ENCODE measurements at regions of chr9 and their contacts with region 1.

Region 1: DNA sequence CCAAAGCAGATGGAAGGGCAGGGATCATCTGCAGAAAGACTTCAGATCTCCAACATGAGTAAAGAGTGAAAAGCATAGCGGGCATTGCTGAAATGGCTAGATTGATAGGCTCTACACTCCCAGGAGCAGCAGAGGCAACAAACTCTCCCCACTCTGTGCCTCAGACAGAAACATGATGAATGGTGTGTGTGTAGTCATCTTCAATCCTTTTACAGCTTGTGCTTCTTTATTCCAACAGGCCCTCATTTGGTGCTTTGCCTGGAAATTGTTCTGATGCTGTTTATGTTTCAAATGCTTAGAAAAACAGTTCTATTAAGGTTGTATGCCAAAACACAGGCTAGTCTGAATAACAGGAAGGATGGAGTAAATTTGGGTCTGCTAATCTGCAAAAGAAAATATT is 176.2 kb downstream of the DMRTA1 start:
- DNase-seq: no peak
- H3K4me3 ChIP-seq: no peak overlapping the region
- H3K27ac ChIP-seq: no peak overlapping the region
- H3K4me1 ChIP-seq: no peaks in the 10 kb centered on the region
- H3K27me3 ChIP-seq: no peaks in the 10 kb centered on the region
- CTCF ChIP-seq: no peak
- POLR2A ChIP-seq: no peak

Region 2: GRCh38 chr9:22374051-22374450 is 248.8 kb before region 1 on chr9:
- intact Hi-C with region 1: no loop called
- DNase-seq: no peak
- H3K4me3 ChIP-seq: no peak overlapping the region
- H3K27ac ChIP-seq: no peak overlapping the region
- H3K4me1 ChIP-seq: no peaks in the 10 kb centered on the region
- H3K27me3 ChIP-seq: no peaks in the 10 kb centered on the region
- CTCF ChIP-seq: no peak
- POLR2A ChIP-seq: no peak

Region 3: GRCh38 chr9:22682961-22683699 is 60.3 kb after region 1 on chr9:
- intact Hi-C with region 1: loop called (anchors 10 kb)
- DNase-seq: no peak
- H3K4me3 ChIP-seq: no peak overlapping the region
- H3K27ac ChIP-seq: no peak overlapping the region
- H3K4me1 ChIP-seq: no peaks in the 10 kb centered on the region
- H3K27me3 ChIP-seq: no peaks in the 10 kb centered on the region
- CTCF ChIP-seq: no peak
- POLR2A ChIP-seq: no peak